ENCODE measurements at regions of chr10 and their contacts with region 1.

Region 1: GRCh38 chr10:50624866-50625692 is 1.3 kb upstream of the SGMS1 start:
- DNase-seq: peak; percentile 76
- H3K4me3 ChIP-seq: peak overlapping the region; percentile 55 to 72 (median 71)
- H3K27ac ChIP-seq: peak overlapping the region; percentile 94
- H3K4me1 ChIP-seq: peaks cover 20% of the 10 kb centered on the region
- H3K27me3 ChIP-seq: no peaks in the 10 kb centered on the region
- CTCF ChIP-seq: peak; percentile 57 to 71
- POLR2A ChIP-seq: peak; percentile 52

Region 2: GRCh38 chr10:50367732-50368131 is 257.3 kb before region 1 on chr10:
- CTCF ChIA-PET with region 1: interaction called, 106 read pairs
- POLR2A ChIA-PET with region 1: no interaction called
- dilution Hi-C with region 1: no loop called
- intact Hi-C with region 1: loop called (anchors 1 kb)
- DNase-seq: peak; percentile 61
- H3K4me3 ChIP-seq: no peak overlapping the region
- H3K27ac ChIP-seq: no peak overlapping the region
- H3K4me1 ChIP-seq: peaks cover under 1% of the 10 kb centered on the region
- H3K27me3 ChIP-seq: no peaks in the 10 kb centered on the region
- CTCF ChIP-seq: peak; percentile 34 to 51
- POLR2A ChIP-seq: no peak

Region 3: DNA sequence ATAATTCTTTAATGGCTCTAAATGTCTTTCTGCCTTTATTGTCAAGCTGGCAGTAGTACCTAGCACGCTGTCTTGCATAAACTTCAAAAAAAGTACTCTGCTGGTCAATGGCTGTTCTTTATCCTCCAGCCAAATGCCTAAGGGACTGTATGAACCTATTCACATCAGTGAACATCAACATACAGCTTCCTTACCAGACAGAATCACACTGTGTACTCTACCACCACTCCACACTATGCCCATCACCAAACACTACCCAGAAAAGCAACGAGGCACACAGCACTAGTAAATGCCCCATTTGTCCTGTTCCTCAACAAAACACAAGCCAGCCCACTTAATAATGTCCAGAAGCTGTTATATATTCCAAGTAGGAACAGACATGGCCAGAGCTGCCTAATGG is 128.9 kb before region 1 on chr10:
- CTCF ChIA-PET with region 1: no interaction called
- POLR2A ChIA-PET with region 1: no interaction called
- dilution Hi-C with region 1: no loop called
- intact Hi-C with region 1: no loop called
- DNase-seq: no peak
- H3K4me3 ChIP-seq: no peak overlapping the region
- H3K27ac ChIP-seq: no peak overlapping the region
- H3K4me1 ChIP-seq: no peaks in the 10 kb centered on the region
- H3K27me3 ChIP-seq: no peaks in the 10 kb centered on the region
- CTCF ChIP-seq: no peak
- POLR2A ChIP-seq: no peak

Region 4: GRCh38 chr10:50561816-50562215 is 63.3 kb before region 1 on chr10:
- CTCF ChIA-PET with region 1: interaction called, 7 read pairs
- POLR2A ChIA-PET with region 1: interaction called, 3 read pairs
- dilution Hi-C with region 1: no loop called
- intact Hi-C with region 1: loop called (anchors 1 kb)
- DNase-seq: no peak
- H3K4me3 ChIP-seq: no peak overlapping the region
- H3K27ac ChIP-seq: no peak overlapping the region
- H3K4me1 ChIP-seq: no peaks in the 10 kb centered on the region
- H3K27me3 ChIP-seq: no peaks in the 10 kb centered on the region
- CTCF ChIP-seq: peak; percentile 16 to 29
- POLR2A ChIP-seq: no peak

Region 5: GRCh38 chr10:50636618-50637579 is 11.8 kb after region 1 on chr10:
- CTCF ChIA-PET with region 1: interaction called, 12 read pairs
- POLR2A ChIA-PET with region 1: no interaction called
- dilution Hi-C with region 1: no loop called
- intact Hi-C with region 1: no loop called
- DNase-seq: no peak
- H3K4me3 ChIP-seq: no peak overlapping the region
- H3K27ac ChIP-seq: no peak overlapping the region
- H3K4me1 ChIP-seq: peaks cover 3% of the 10 kb centered on the region
- H3K27me3 ChIP-seq: peaks cover 2 to 4% of the 10 kb centered on the region in 2 experiments
- CTCF ChIP-seq: no peak
- POLR2A ChIP-seq: no peak

Region 6: GRCh38 chr10:50739618-50740292 is 114.7 kb after region 1 on chr10 and contains the start of gene ASAH2B:
- CTCF ChIA-PET with region 1: no interaction called
- POLR2A ChIA-PET with region 1: interaction called, 3 read pairs
- dilution Hi-C with region 1: no loop called
- intact Hi-C with region 1: loop called (anchors 1 kb)
- DNase-seq: peak; percentile 83
- H3K4me3 ChIP-seq: peak within 1 kb of the TSS; percentile 65 to 76 (median 70)
- H3K27ac ChIP-seq: peak within 1 kb of the TSS; percentile 87
- H3K4me1 ChIP-seq: no peaks in the 10 kb centered on the region
- H3K27me3 ChIP-seq: no peaks in the 10 kb centered on the region
- CTCF ChIP-seq: no peak
- POLR2A ChIP-seq: peak; percentile 69
- total RNA-seq, gene ASAH2B: 3.3 and 6.5 TPM in 2 replicates